ENCODE measurements at regions of chr5 and their contacts with region 1.

Region 1: DNA sequence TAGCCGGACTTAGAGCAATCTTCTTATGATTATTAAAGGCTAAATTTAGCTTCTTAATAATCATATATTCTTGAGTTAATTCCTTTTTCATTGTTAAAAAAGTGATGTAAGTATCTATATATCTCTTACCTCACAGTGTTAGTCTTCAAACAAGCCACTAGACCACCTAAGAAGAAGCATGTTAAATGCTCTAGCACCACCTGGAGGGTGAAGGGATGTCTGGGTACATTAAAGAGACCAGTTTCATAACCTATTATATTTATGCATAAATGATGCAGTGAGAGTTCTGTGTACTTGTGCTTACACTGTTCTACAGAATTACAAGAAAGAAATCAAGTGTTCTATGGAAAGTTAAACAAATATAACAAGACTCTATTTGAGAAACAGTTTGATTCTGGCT is 55.9 kb upstream of the SLCO6A1 start:
- DNase-seq: peak in 1 of 2 experiments; percentile 7
- H3K4me3 ChIP-seq: no peak overlapping the region
- H3K4me3 Mint-ChIP-seq: no peak overlapping the region
- H3K27ac Mint-ChIP-seq: no peak overlapping the region
- H3K4me1 ChIP-seq: no peaks in the 10 kb centered on the region
- H3K4me1 Mint-ChIP-seq: no peaks in the 10 kb centered on the region
- H3K27me3 ChIP-seq: no peaks in the 10 kb centered on the region
- H3K27me3 Mint-ChIP-seq: no peaks in the 10 kb centered on the region
- CTCF ChIP-seq: no peak

Region 2: GRCh38 chr5:102421647-102422046 is 133.1 kb before region 1 on chr5:
- CTCF ChIA-PET with region 1: no interaction called
- POLR2A ChIA-PET with region 1: no interaction called
- intact Hi-C with region 1: loop called (anchors 1 kb)
- DNase-seq: peak; percentile 28 to 52
- H3K4me3 ChIP-seq: no peak overlapping the region
- H3K4me3 Mint-ChIP-seq: no peak overlapping the region
- H3K27ac Mint-ChIP-seq: no peak overlapping the region
- H3K4me1 ChIP-seq: no peaks in the 10 kb centered on the region
- H3K4me1 Mint-ChIP-seq: no peaks in the 10 kb centered on the region
- H3K27me3 ChIP-seq: no peaks in the 10 kb centered on the region; the same call in 1 of the 2 replicates
- H3K27me3 Mint-ChIP-seq: peaks cover 3% of the 10 kb centered on the region
- CTCF ChIP-seq: peak; percentile 32 to 46

Region 3: DNA sequence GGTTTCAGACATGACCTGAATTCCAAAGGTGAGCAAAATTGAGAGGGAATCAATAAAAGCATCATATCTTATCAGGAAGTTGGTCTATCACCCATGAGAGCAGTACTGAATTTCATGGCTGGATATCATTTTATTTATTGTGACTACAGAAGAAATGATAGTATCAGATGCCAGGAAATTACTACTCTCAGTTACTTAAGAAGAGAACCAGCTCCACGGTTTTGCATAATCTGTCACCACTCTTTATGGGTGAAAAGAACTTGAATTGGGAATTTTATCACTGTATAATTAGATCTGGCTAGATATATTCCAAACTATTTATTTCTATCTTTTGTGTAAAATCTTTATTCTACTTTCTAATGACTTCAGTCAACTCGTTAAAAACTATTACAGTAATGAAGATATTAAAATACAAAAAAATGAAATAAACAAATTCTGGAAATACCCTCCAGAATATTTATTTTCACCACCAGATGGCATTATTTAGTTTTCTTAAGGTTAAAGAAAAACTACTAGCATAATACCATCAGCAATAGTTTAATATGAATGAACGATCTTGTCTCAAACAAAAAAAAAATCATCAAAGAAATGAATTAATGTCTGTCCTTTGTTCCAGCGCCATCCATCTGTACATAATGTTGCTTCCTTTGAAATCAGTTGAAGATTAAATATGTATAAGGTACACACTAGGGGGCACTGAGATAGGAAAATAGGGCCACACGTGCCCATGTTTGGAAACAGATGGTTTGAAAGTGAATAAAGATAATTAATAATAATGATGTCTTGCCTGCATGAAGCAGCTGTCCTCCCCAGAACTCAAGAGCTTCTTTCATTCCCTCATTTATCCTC is 28.8 kb after region 1 on chr5:
- CTCF ChIA-PET with region 1: no interaction called
- POLR2A ChIA-PET with region 1: no interaction called
- intact Hi-C with region 1: no loop called
- DNase-seq: no peak
- H3K4me3 ChIP-seq: no peak overlapping the region
- H3K4me3 Mint-ChIP-seq: no peak overlapping the region
- H3K27ac Mint-ChIP-seq: no peak overlapping the region
- H3K4me1 ChIP-seq: no peaks in the 10 kb centered on the region
- H3K4me1 Mint-ChIP-seq: no peaks in the 10 kb centered on the region
- H3K27me3 ChIP-seq: no peaks in the 10 kb centered on the region
- H3K27me3 Mint-ChIP-seq: no peaks in the 10 kb centered on the region
- CTCF ChIP-seq: peak in 1 of 2 experiments; percentile 63